ENCODE measurements at regions of chr6 and their contacts with region 1.

Region 1: GRCh38 chr6:149324428-149324827 is 6.9 kb downstream of the TAB2 start:
- DNase-seq: no peak
- ATAC-seq: peak; percentile 28; the same call in 2 of the 3 replicates
- H3K4me3 ChIP-seq: no peak overlapping the region
- H3K27ac ChIP-seq: no peak overlapping the region
- H3K4me1 ChIP-seq: peaks cover 10% of the 10 kb centered on the region
- H3K27me3 ChIP-seq: no peaks in the 10 kb centered on the region
- CTCF ChIP-seq: no peak
- EP300 ChIP-seq: no peak
- POLR2A ChIP-seq: no peak
- RAD21 ChIP-seq: no peak

Region 2: DNA sequence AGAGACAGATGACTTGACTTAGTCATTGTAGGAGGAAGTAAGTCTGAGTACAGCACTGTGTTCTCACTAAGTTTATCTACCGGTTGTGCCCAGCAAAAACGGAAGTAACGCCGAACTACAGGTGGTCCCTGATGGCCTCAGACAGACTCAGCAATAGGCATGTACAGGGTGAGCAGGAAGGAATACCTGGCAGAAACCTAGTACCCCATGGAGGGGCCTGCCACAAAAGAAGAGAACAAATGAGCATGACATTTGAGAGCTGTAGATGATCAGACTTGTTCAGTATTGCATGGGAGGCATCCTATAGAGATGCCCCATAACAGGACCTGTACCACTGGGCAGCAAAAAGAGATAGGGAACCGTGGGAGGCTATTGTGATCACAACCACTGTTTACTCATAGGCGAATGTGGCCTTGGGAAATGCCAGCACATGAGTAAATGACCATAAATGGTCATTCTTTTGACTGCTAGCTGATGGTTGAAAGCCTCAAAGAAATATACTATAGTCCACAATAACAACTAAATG is 113.3 kb before region 1 on chr6:
- CTCF ChIA-PET with region 1: no interaction called
- POLR2A ChIA-PET with region 1: no interaction called
- RAD21 ChIA-PET with region 1: no interaction called
- SMC1A ChIA-PET with region 1: interaction called, 22 read pairs
- in situ Hi-C with region 1: no loop called
- intact Hi-C with region 1: loop called (anchors 2 kb)
- DNase-seq: no peak
- ATAC-seq: peak; percentile 66
- H3K4me3 ChIP-seq: no peak overlapping the region
- H3K27ac ChIP-seq: peak overlapping the region; percentile 64
- H3K4me1 ChIP-seq: peaks cover 43% of the 10 kb centered on the region
- H3K27me3 ChIP-seq: no peaks in the 10 kb centered on the region
- CTCF ChIP-seq: no peak
- EP300 ChIP-seq: no peak
- POLR2A ChIP-seq: no peak
- RAD21 ChIP-seq: no peak

Region 3: GRCh38 chr6:149284904-149285303 is 39.5 kb before region 1 on chr6:
- CTCF ChIA-PET with region 1: no interaction called
- POLR2A ChIA-PET with region 1: no interaction called
- RAD21 ChIA-PET with region 1: no interaction called
- SMC1A ChIA-PET with region 1: no interaction called
- in situ Hi-C with region 1: no loop called
- intact Hi-C with region 1: no loop called
- DNase-seq: no peak
- ATAC-seq: peak; percentile 82
- H3K4me3 ChIP-seq: no peak overlapping the region
- H3K27ac ChIP-seq: no peak overlapping the region
- H3K4me1 ChIP-seq: no peaks in the 10 kb centered on the region
- H3K27me3 ChIP-seq: no peaks in the 10 kb centered on the region
- CTCF ChIP-seq: no peak
- EP300 ChIP-seq: no peak
- POLR2A ChIP-seq: no peak
- RAD21 ChIP-seq: no peak

Region 4: GRCh38 chr6:149335924-149336608 is 11.6 kb after region 1 on chr6:
- CTCF ChIA-PET with region 1: interaction called, 56 read pairs
- POLR2A ChIA-PET with region 1: interaction called, 13 read pairs
- RAD21 ChIA-PET with region 1: interaction called, 74 read pairs
- SMC1A ChIA-PET with region 1: interaction called, 199 read pairs
- in situ Hi-C with region 1: no loop called
- intact Hi-C with region 1: loop called (anchors 2 kb)
- DNase-seq: no peak
- ATAC-seq: peak; percentile 50
- H3K4me3 ChIP-seq: peak overlapping the region; percentile 32; the same call in 1 of the 2 replicates
- H3K27ac ChIP-seq: peak overlapping the region; percentile 73
- H3K4me1 ChIP-seq: peaks cover 36% of the 10 kb centered on the region
- H3K27me3 ChIP-seq: no peaks in the 10 kb centered on the region
- CTCF ChIP-seq: no peak
- EP300 ChIP-seq: no peak
- POLR2A ChIP-seq: no peak
- RAD21 ChIP-seq: no peak

Region 5: DNA sequence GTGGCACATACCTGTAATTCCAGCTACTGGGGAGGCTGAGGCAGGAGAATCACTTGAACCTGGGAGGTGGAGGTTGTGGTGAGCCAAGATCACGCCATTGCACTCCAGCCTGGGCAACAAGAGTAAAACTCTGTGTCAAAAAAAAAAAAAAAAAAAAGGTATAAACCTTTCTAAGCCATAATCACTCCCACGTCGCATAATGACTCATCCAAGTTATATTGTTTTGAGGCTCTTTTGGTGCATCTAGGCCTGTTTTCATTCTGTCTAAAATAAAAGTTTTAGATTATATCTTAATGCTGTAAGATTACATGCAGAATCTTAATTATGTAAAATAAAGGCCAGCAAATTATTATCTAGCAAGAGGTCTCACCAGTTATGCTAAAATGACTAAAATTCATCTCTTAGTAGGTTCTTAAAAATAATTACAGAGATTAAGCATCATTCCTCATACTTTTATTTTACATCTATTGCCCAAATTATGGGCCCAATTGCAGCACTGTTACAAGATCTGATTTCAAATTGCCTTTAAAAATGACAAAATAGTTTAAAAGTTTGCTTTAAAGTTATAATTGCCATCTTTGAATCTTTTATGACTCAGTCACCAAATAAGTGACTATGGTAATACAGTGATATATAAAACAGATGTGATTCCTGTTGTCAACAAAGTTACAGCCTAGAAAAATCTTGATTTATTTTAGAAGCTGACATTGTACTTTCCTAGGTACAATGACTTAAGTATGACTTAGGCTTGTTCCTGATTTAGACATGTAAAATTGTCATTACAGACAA is 65.3 kb after region 1 on chr6:
- CTCF ChIA-PET with region 1: no interaction called
- POLR2A ChIA-PET with region 1: no interaction called
- RAD21 ChIA-PET with region 1: interaction called, 5 read pairs
- SMC1A ChIA-PET with region 1: interaction called, 22 read pairs
- in situ Hi-C with region 1: no loop called
- intact Hi-C with region 1: loop called (anchors 5 kb)
- DNase-seq: no peak
- ATAC-seq: no peak
- H3K4me3 ChIP-seq: no peak overlapping the region
- H3K27ac ChIP-seq: no peak overlapping the region
- H3K4me1 ChIP-seq: no peaks in the 10 kb centered on the region
- H3K27me3 ChIP-seq: no peaks in the 10 kb centered on the region
- CTCF ChIP-seq: no peak
- EP300 ChIP-seq: no peak
- POLR2A ChIP-seq: no peak
- RAD21 ChIP-seq: no peak

Region 6: GRCh38 chr6:149423964-149424440 is 99.6 kb after region 1 on chr6:
- CTCF ChIA-PET with region 1: no interaction called
- POLR2A ChIA-PET with region 1: interaction called, 4 read pairs
- RAD21 ChIA-PET with region 1: interaction called, 11 read pairs
- SMC1A ChIA-PET with region 1: interaction called, 8 read pairs
- in situ Hi-C with region 1: no loop called
- intact Hi-C with region 1: no loop called
- DNase-seq: no peak
- ATAC-seq: no peak
- H3K4me3 ChIP-seq: no peak overlapping the region
- H3K27ac ChIP-seq: no peak overlapping the region
- H3K4me1 ChIP-seq: peaks cover 11% of the 10 kb centered on the region
- H3K27me3 ChIP-seq: no peaks in the 10 kb centered on the region; a peak in 1 of 4 replicates
- CTCF ChIP-seq: no peak
- EP300 ChIP-seq: no peak
- POLR2A ChIP-seq: no peak
- RAD21 ChIP-seq: no peak